Transverse colon (tissue), 4 donors: ENCODE measurements at regions of chr17 and their contacts with region 1.

Region 1: GRCh38 chr17:10398352-10398751 is 23.4 kb downstream of the MYH8 start:
- DNase-seq: no peak
- H3K4me3 ChIP-seq: no peak overlapping the region
- H3K27ac ChIP-seq: no peak overlapping the region
- H3K4me1 ChIP-seq: peaks cover 0 to 3% (median 0%) of the 10 kb centered on the region in 4 donors
- H3K27me3 ChIP-seq: no peaks in the 10 kb centered on the region
- CTCF ChIP-seq: no peak
- EP300 ChIP-seq: no peak
- POLR2A ChIP-seq: no peak

Region 2: GRCh38 chr17:8894673-8895578 is 1503.4 kb before region 1 on chr17:
- in situ Hi-C with region 1: no loop called
- intact Hi-C with region 1: loop called (anchors 5 kb)
- DNase-seq: peak; percentile 53
- H3K4me3 ChIP-seq: no peak overlapping the region
- H3K27ac ChIP-seq: no peak overlapping the region
- H3K4me1 ChIP-seq: peaks cover 0 to 5% (median 0%) of the 10 kb centered on the region in 4 donors
- H3K27me3 ChIP-seq: no peaks in the 10 kb centered on the region
- CTCF ChIP-seq: peak; percentile 60 to 80 (median 76)
- EP300 ChIP-seq: no peak
- POLR2A ChIP-seq: no peak

Region 3: DNA sequence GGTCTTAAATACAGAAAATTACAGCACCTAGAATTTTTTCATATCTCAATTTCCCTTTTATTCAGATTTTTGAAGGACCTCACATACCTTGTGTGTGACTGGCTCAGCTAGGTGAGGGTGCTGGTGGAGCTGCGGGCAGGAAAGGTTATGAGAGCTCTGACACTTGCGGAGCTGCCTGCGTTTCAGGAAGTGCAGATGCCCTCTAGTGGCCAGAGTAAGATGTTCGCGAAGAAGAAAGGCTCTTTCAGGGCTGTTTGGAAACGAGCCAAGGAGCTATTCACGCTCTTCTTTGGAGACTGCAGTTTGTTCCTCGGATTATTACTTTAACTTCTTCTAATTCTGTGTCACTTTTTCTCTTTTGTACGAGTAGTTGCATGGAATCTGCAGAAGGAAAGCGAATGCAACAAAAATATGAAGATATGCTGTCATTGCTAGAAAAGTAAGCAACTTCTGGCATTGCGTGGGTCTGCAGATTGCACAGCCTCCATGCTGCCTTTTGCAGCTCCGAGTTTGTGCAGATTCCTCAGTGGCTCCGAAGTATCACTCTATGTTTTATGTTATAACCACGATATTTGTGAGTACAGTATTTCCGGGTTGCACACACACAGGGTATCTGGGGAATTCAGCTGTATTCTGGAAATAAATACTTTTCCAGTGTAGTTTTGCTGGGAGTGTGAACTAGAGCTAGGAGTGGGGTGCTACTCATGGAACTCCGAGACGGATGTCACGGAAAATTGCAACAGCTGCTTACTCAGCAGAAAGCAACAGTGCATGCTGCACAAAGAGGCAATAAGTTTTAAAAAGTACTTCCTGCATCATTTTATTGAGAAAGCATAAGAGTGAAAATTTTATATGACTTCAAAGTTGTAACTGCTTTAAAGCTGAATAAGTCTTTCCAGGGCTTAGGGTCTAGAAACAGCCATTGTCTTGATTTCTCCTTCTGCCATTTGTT is 1246.2 kb after region 1 on chr17:
- in situ Hi-C with region 1: no loop called
- intact Hi-C with region 1: loop called (anchors 5 kb)
- DNase-seq: peak; percentile 71
- H3K4me3 ChIP-seq: no peak overlapping the region
- H3K27ac ChIP-seq: no peak overlapping the region
- H3K4me1 ChIP-seq: peaks cover 0 to 8% (median 3%) of the 10 kb centered on the region in 4 donors
- H3K27me3 ChIP-seq: no peaks in the 10 kb centered on the region
- CTCF ChIP-seq: peak; percentile 69 to 82 (median 80)
- EP300 ChIP-seq: no peak
- POLR2A ChIP-seq: no peak